Activated CD4-positive, alpha-beta memory T cell treated with anti-CD3 and anti-CD28 coated beads, Interleukin-2, amount 10 ng/mL, durations not matched to agents 7 days and 5 days (primary cell): ENCODE measurements at regions of chr11 and their contacts with region 1.

Region 1: DNA sequence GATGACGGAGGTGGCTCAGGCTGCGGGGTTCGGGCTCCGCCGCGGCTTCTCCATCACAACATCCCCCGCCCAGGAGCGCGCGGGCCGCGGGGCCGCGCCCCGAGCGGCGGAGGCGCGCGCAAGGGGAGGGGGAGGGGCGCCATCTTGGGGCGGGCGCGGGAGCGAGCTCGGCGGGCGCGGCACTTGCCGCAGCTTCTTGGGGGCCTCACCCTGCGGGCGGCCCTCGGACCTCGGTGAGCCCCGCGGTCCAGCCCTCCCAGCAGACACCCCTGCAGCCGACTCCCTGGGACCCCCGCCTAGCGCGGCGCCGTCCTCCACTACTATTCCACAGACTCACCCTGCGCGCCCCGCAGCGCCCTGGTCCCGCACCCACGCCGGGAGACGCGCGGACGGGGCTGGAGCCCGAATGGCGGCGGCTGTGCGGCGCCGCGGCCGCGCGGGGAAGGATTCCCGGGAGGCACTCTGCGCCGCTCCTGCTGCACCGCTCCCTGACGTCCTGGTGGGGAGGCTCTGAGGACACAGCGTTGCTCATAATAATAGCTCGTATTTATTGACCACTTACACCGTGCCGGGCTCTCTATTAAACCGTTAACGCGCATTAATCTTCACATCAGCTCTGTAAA is at the start of gene APBB1:
- DNase-seq: peak; percentile 78
- H3K4me3 Mint-ChIP-seq: peak within 1 kb of the TSS; percentile 75
- H3K27ac Mint-ChIP-seq: peak within 1 kb of the TSS; percentile 17
- H3K4me1 Mint-ChIP-seq: peaks cover 4% of the 10 kb centered on the region
- H3K27me3 Mint-ChIP-seq: peaks cover 28% of the 10 kb centered on the region
- total RNA-seq, gene APBB1: 56.0 to 57.6 TPM

Region 2: GRCh38 chr11:6402561-6402981 is 16.5 kb before region 1 on chr11:
- CTCF ChIA-PET with region 1: interaction called, 5 read pairs
- POLR2A ChIA-PET with region 1: interaction called, 56 read pairs
- DNase-seq: peak; percentile 87
- H3K4me3 Mint-ChIP-seq: peak overlapping the region; percentile 67
- H3K27ac Mint-ChIP-seq: peak overlapping the region; percentile 97
- H3K4me1 Mint-ChIP-seq: peaks cover 64% of the 10 kb centered on the region
- H3K27me3 Mint-ChIP-seq: no peaks in the 10 kb centered on the region

Region 3: GRCh38 chr11:6431861-6432260 is 12.7 kb after region 1 on chr11:
- CTCF ChIA-PET with region 1: no interaction called
- POLR2A ChIA-PET with region 1: interaction called, 12 read pairs
- DNase-seq: no peak
- H3K4me3 Mint-ChIP-seq: no peak overlapping the region
- H3K27ac Mint-ChIP-seq: no peak overlapping the region
- H3K4me1 Mint-ChIP-seq: peaks cover 4% of the 10 kb centered on the region
- H3K27me3 Mint-ChIP-seq: peaks cover 8% of the 10 kb centered on the region

Region 4: DNA sequence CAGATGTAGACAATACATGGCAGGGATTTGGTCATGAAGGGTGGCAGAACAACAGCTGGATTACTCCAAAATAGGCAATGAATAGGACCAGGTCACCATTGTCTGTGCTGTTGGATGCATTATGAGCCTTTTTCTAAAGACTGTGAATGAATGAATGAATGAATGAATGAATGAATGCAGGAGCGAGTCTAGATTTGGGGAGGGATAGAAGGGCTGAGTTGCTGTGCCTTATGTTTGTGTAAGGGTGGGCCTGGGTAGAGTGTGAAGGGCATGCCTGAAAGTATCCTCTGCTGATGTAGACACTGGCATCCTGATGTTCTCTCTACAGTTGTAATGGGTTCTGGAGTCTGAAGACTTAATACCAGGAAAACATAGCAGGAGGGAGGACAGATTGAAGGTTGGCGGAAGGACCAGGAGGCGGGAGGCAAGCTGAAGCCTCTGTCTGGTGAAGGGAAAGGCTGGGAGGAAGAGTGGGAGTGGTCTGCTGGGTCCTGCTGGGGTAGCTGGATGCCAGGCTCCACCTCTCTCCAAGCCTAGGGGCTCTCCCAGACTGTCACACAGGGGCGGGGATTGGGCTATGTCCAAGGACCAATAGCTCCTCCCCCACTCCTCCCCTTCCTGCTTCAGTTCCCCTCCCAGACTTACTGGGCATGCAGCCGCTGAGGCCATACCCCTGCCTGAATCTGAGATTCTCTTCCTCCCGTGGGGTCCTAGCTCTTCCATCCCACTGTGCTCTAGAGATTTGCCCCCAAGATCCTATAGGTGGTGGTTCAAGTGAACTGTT is 49.8 kb after region 1 on chr11:
- CTCF ChIA-PET with region 1: no interaction called
- POLR2A ChIA-PET with region 1: no interaction called
- DNase-seq: no peak
- H3K4me3 Mint-ChIP-seq: no peak overlapping the region
- H3K27ac Mint-ChIP-seq: no peak overlapping the region
- H3K4me1 Mint-ChIP-seq: peaks cover 15% of the 10 kb centered on the region
- H3K27me3 Mint-ChIP-seq: peaks cover 4% of the 10 kb centered on the region